ENCODE measurements at regions of chr10 and their contacts with region 1.

Region 1: GRCh38 chr10:1434912-1435692 is 302.2 kb downstream of the ADARB2 start:
- DNase-seq: no peak
- H3K4me3 ChIP-seq: no peak overlapping the region
- H3K27ac ChIP-seq: no peak overlapping the region
- H3K4me1 ChIP-seq: no peaks in the 10 kb centered on the region
- H3K27me3 ChIP-seq: peaks cover 0 to 8% of the 10 kb centered on the region in 2 donors
- CTCF ChIP-seq: no peak
- POLR2A ChIP-seq: no peak

Region 2: GRCh38 chr10:1454428-1454827 is 19.3 kb after region 1 on chr10:
- intact Hi-C with region 1: loop called (anchors 1 kb)
- DNase-seq: no peak
- H3K4me3 ChIP-seq: no peak overlapping the region
- H3K27ac ChIP-seq: peak overlapping the region in 1 of 2 donors; percentile 61
- H3K4me1 ChIP-seq: no peaks in the 10 kb centered on the region
- H3K27me3 ChIP-seq: peaks cover 0 to 7% of the 10 kb centered on the region in 2 donors
- CTCF ChIP-seq: no peak
- POLR2A ChIP-seq: no peak

Region 3: DNA sequence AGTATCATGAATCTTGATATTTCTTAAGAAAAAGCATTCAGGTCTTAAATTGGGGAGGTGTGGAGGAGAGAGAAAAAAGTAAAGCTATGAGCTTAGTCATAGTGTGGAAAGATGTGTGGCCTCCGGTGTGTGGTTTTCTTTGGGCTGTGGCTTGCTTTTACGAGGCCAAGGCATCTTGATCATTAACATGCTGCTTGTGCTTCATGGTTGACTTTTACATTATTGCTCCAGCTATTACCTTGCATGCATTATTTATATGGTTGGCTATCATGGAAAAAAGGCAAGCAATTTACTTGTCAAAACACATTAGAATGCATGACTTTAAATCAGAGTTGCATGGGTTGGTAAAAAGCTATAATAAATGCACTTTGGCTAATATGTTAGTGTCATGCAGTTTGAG is 602.9 kb after region 1 on chr10:
- intact Hi-C with region 1: no loop called
- DNase-seq: no peak
- H3K4me3 ChIP-seq: no peak overlapping the region
- H3K27ac ChIP-seq: no peak overlapping the region
- H3K4me1 ChIP-seq: no peaks in the 10 kb centered on the region
- H3K27me3 ChIP-seq: no peaks in the 10 kb centered on the region
- CTCF ChIP-seq: no peak
- POLR2A ChIP-seq: no peak